Activated naive CD4-positive, alpha-beta T cell treated with anti-CD3 and anti-CD28 coated beads for 36 hours (primary cell): ENCODE measurements at regions of chr2 and their contacts with region 1.

Region 1: DNA sequence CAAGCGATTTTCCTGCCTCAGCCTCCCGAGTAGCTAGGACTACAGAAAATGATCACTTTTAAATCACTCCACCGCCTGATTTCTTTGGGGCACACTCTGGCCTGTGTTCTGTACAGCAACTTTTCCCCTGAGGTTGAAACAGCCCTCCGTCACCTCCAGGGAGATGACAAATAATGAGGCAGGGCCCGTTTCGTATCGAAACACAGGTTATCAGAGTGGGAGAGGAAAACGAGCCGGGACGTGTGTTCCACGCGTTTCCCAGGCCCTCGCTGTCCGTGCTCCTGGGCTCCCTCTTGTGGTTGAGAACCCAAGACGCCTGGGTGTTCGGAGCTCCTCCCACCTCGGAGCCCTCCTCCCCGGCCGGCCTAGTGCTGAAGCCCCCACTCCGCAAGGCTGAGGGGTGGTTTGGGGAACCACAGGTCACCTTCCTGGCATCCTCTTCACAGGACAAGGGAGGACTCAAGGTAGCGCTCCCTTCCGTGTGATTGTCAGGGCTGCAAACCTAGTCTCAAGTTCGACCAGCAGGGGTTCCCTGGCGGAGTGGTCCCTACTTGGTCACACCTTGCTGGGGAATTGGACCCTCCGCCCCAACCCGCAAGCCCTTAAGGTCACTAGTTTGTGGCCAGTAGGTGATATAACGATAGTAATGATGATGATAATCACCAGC is 12.8 kb downstream of the ATP6V1B1 start:
- DNase-seq: peak; percentile 87
- H3K4me3 Mint-ChIP-seq: peak overlapping the region; percentile 79
- H3K27ac Mint-ChIP-seq: no peak overlapping the region
- H3K4me1 Mint-ChIP-seq: peaks cover 13% of the 10 kb centered on the region
- H3K27me3 Mint-ChIP-seq: peaks cover 6% of the 10 kb centered on the region

Region 2: DNA sequence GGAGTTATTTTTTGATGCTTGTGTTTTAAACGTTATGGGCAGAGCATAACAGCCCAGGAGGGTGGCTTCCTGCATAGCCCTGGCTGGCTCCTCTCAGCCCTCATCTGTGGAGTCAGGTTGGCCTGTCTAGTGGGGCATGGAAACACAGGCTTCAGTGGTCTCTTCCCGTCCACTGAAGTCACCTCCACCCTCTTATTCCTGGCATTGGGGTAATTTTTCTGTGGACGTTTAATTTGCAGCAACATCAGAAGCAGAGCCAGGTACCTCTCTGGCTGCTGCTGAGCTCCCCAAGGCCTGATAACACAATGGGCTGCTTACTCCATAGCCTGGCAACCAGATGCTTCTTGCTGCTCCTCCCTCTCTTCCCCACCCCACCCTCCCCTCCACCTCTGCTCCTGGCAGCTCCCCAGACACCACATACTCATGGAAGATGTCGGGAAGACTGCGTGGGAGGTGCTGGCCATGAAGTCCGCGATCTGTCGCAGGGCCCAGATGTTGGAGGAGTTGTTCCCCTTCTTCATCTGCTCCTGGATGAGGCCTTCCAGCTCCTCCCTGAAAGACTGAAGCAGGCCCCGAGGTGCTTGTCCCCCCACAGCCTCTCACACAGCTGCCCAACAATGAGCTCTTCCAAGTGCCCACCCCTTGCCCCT is 244.4 kb before region 1 on chr2:
- CTCF ChIA-PET with region 1: no interaction called
- intact Hi-C with region 1: no loop called
- DNase-seq: no peak
- H3K4me3 Mint-ChIP-seq: no peak overlapping the region
- H3K27ac Mint-ChIP-seq: no peak overlapping the region
- H3K4me1 Mint-ChIP-seq: peaks cover 6% of the 10 kb centered on the region
- H3K27me3 Mint-ChIP-seq: no peaks in the 10 kb centered on the region

Region 3: DNA sequence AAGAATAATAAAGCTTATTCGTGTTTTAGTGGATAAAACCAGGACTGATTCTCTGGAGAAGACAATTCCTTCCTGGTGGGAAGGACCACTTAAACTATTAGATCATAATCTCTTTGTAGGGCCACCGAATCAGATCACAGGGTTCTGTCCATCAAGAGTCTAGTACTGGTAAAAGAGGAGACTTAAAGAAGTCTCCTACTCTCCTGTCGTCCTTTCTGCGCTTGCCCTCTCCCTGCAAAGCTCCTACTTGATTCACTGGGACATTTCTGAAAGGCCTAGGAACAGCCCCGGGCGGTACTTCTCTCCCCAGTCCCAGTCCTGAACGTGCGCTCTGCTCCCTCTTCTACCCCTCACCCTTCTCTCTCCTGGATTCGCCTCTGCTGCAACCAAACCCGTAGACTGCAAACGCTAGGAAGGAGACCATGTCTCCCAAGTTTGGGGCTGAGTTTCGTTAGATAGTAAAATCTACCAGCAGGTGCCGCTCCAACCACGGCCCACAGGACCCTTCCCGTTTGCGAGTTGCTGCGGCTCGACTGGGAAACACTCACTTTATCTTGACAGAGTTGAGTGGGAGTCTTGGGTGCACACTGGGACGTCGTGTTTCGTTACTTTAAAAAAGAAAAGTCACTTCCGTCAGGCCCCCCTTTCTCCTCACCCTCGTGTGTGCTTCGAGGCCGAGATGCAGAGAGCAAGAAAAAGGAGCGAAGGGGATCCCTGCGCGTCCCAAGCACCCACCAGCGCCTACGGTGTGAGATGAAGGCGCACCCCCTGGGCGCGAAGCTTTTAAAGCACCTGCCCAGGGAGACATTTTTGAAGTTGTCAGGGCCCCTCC is 158.9 kb before region 1 on chr2:
- CTCF ChIA-PET with region 1: interaction called, 49 read pairs
- intact Hi-C with region 1: loop called (anchors 1 kb)
- DNase-seq: peak; percentile 89
- H3K4me3 Mint-ChIP-seq: peak overlapping the region; percentile 74
- H3K27ac Mint-ChIP-seq: no peak overlapping the region
- H3K4me1 Mint-ChIP-seq: peaks cover 14% of the 10 kb centered on the region
- H3K27me3 Mint-ChIP-seq: peaks cover 40% of the 10 kb centered on the region

Region 4: DNA sequence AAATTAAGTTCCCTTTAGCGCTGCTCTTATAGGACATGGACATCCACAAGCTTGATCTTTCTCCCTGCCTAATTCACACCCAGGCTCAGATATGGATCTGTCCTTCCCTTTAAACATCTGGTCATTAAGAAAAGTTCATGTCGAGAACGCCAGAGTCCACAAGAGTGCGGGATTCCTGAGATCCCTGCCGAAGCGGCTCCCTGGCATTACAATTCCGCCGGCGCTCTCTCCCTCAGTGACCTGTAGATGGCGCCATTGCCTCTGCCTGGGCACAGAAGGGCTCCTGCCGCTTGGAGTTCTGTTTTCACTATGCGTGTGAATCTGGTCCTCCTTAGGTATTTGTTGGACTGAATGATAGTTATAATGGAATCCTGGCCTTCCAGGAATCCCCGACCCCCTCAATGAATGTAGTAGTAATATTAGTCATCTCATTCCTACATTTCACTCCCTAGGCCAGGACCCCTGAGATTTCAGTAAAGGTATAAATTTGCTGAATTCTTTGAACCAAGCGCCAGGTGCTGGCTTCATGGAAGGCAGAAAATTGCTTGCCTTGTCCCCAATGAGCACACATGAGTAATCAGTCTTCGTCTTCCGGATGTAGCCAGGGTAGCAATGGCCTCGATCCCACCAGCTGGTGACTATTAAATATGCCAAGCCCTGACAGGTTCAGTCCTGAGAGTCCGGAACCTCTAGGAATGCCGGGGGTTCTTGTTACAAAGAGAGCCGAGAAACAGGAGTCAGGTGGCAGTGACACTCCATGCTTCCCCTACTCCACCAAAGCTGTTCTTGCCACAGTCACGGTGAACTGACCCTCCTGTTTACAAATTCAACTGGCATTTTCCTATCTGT is 86.5 kb before region 1 on chr2:
- CTCF ChIA-PET with region 1: interaction called, 57 read pairs
- intact Hi-C with region 1: loop called (anchors 1 kb)
- DNase-seq: peak; percentile 87
- H3K4me3 Mint-ChIP-seq: no peak overlapping the region
- H3K27ac Mint-ChIP-seq: no peak overlapping the region
- H3K4me1 Mint-ChIP-seq: peaks cover 2% of the 10 kb centered on the region
- H3K27me3 Mint-ChIP-seq: peaks cover 12% of the 10 kb centered on the region

Region 5: DNA sequence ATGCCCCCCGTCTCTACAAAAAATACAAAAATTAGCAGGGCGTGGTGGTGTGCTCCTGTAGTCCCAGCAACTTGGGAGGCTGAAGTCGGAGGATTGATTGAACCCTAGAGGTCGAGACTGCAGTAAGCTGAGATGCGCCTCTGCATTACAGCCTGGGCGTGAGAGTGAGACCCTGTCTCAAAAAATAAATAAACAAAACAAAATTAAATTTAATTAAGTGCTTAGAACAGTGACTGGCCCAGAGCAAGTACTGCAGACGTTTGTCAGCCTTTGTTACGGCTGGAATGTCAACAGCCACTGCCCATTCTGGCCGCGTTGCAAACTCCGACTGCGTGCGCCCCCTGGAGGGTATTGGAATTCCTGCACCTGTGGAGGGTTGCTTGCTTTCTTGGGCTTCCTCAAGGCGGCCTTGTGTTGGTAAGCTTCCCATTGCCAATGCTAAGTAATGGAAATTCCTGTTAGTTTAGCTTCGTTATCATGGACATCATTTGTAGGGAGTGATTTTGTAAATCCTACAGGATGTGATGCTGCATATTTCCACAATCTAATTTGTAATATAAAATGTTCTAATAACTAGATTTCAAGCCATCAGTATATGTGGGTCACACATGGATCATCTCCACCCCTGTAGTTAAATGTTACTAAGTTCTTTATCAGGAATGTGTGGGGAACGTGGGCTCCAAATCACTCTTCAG is 28.7 kb before region 1 on chr2:
- CTCF ChIA-PET with region 1: interaction called, 29 read pairs
- intact Hi-C with region 1: loop called (anchors 2 kb)
- DNase-seq: peak; percentile 85
- H3K4me3 Mint-ChIP-seq: no peak overlapping the region
- H3K27ac Mint-ChIP-seq: no peak overlapping the region
- H3K4me1 Mint-ChIP-seq: no peaks in the 10 kb centered on the region
- H3K27me3 Mint-ChIP-seq: peaks cover 22% of the 10 kb centered on the region

Region 6: DNA sequence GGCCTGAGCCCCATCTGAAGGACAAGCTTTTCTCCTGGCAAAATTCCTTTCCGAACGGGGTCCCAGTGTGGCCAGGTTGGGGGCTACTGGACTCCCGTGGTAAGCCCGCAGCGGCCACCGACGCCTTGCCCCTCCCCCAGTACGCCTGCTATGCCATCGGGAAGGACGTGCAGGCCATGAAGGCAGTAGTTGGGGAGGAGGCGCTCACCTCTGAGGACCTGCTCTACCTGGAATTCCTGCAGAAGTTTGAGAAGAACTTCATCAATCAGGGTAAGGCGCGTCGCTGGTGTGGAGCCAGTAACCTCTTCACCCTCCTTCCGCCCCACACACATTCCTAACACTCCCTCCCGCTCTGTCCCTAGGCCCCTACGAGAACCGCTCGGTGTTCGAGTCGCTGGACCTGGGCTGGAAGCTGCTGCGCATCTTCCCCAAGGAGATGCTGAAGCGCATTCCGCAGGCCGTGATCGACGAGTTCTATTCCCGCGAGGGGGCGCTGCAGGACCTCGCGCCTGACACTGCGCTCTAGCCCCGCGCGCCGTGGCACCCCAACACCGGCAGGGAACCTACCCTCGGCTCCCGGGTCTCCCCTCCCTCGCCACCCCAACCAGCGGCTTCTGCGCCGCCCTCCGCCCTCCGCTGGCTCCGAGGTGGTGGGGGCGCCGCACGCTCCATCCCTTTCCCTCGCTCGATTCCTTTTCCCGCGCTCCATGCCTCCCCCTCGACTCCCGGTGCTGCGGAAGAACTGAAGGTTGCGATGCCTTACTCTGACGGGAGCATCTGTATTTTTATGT is 16.3 kb after region 1 on chr2:
- CTCF ChIA-PET with region 1: interaction called, 11 read pairs
- intact Hi-C with region 1: no loop called
- DNase-seq: peak; percentile 86
- H3K4me3 Mint-ChIP-seq: peak overlapping the region; percentile 81
- H3K27ac Mint-ChIP-seq: no peak overlapping the region
- H3K4me1 Mint-ChIP-seq: peaks cover 3% of the 10 kb centered on the region
- H3K27me3 Mint-ChIP-seq: peaks cover 17% of the 10 kb centered on the region

Region 7: GRCh38 chr2:70994756-70995729 is 46.6 kb after region 1 on chr2 and contains the start of gene TEX261:
- CTCF ChIA-PET with region 1: interaction called, 8 read pairs
- intact Hi-C with region 1: loop called (anchors 1 kb)
- DNase-seq: peak; percentile 91
- H3K4me3 Mint-ChIP-seq: peak within 1 kb of the TSS; percentile 94
- H3K27ac Mint-ChIP-seq: peak within 1 kb of the TSS; percentile 89
- H3K4me1 Mint-ChIP-seq: peaks cover 33% of the 10 kb centered on the region
- H3K27me3 Mint-ChIP-seq: no peaks in the 10 kb centered on the region
- total RNA-seq, gene TEX261: 17.8 to 18.7 TPM